SK-N-SH (cell line): ENCODE measurements at regions of chr15 and their contacts with region 1.

Region 1: GRCh38 chr15:66774001-66774814 is 72.2 kb downstream of the SMAD6 start:
- DNase-seq: peak; percentile 95
- H3K4me3 ChIP-seq: peak overlapping the region in 1 of 2 experiments; percentile 19; a peak in 1 of 4 replicates
- H3K27ac ChIP-seq: peak overlapping the region; percentile 62 to 81
- H3K4me1 ChIP-seq: peaks cover 31 to 50% of the 10 kb centered on the region in 2 experiments
- H3K27me3 ChIP-seq: no peaks in the 10 kb centered on the region
- CTCF ChIP-seq: peak; percentile 92
- EP300 ChIP-seq: no peak
- RAD21 ChIP-seq: peak; percentile 92

Region 2: DNA sequence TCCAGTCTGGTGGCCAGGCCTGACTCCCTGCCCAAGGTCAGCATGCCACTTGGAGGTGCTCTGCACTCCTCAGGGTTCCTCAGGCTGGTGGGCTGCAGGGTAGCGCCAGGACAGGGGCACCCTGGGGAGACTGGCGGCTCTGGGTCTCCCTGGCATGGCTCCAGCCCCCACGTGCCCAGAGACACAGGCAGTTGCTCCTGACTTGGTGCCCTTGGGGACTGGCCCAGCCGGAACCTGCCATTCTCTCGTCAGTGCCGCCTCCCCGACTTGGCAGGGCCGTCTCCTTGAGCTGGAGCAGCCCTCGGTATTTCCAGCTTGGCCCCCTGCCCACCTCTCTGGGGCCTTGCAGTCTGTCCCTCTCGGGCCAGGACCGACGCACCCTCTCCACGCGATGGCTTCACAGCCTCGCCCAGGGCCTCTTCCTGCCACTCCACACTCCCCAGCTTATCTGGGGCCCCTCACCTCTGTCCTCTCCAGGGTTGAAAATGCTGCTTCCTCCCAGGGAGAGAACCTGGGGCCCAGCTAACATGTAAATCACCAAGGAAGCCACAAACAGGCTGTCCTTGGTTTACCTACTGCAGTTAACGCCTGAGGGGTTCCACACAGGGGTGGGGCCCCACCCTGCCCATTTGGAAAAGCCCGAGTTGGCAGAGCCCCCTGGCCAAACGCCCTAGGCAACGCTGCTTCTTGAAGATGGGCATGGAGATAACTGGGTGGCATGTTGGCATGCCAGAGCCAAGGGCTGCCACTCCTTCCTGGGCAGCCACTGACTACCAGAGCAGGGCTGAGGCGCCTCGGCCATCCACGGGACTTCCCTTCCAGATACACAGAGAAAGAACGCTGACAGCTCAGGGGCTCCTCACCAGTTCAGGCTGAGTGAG is 10.8 kb before region 1 on chr15:
- CTCF ChIA-PET with region 1: interaction called, 27 read pairs
- POLR2A ChIA-PET with region 1: no interaction called
- DNase-seq: peak; percentile 55
- H3K4me3 ChIP-seq: no peak overlapping the region
- H3K27ac ChIP-seq: peak overlapping the region; percentile 39 to 42; a peak in 3 of 4 replicates
- H3K4me1 ChIP-seq: peaks cover 26 to 58% of the 10 kb centered on the region in 2 experiments
- H3K27me3 ChIP-seq: no peaks in the 10 kb centered on the region
- CTCF ChIP-seq: no peak
- EP300 ChIP-seq: no peak
- RAD21 ChIP-seq: no peak

Region 3: DNA sequence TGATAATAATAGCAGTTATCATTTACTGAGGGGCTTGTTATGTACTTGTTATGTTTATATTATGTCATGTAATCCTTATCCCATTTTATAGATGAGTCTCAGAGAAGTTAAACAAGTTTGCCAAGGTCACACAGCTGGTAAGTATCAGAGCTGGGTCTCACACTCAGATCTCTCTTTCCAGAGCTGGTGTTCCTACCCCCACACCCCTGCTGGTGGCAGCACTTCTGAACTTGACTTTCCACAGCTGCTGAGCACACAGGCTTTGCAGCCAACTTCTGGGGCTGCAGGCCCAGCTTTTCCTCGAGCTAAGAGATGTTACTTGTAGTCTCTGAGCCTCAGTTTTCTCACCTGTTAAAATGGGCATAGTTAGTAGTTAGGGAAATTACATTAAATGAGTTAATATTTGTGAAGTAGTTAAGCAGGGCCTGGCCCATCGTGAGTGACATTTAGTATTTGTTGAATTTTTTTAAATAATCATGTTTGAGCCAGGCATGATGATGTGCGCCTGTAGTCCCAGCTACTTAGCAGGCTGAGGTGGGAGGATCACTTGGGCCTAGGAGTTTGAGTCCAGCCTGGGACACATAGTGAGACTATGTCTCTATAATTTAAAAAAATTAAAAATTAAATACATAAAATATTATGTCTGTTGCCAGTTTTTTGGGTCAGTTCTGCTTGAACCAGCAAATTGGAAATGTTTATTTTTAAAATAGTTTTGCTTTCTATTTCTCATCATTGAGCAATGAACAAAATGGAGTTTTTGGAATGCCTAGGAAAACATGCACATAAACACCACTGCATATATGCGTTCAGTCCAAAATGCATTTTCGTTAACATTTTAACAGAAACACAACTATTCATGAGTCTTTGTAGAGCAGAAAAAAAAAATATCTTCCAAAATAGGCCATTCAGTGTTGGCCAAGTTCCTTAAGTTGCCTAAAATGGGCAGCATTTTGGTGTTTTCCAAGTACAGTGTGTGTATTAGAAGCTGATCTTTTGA is 15.1 kb after region 1 on chr15:
- CTCF ChIA-PET with region 1: interaction called, 33 read pairs
- POLR2A ChIA-PET with region 1: no interaction called
- DNase-seq: no peak
- H3K4me3 ChIP-seq: no peak overlapping the region
- H3K27ac ChIP-seq: no peak overlapping the region
- H3K4me1 ChIP-seq: peaks cover 0 to 11% of the 10 kb centered on the region in 2 experiments; a peak in 3 of 4 replicates
- H3K27me3 ChIP-seq: no peaks in the 10 kb centered on the region
- CTCF ChIP-seq: peak; percentile 58
- EP300 ChIP-seq: no peak
- RAD21 ChIP-seq: peak; percentile 51